ENCODE measurements at regions of chr14 and their contacts with region 1.

Region 1: DNA sequence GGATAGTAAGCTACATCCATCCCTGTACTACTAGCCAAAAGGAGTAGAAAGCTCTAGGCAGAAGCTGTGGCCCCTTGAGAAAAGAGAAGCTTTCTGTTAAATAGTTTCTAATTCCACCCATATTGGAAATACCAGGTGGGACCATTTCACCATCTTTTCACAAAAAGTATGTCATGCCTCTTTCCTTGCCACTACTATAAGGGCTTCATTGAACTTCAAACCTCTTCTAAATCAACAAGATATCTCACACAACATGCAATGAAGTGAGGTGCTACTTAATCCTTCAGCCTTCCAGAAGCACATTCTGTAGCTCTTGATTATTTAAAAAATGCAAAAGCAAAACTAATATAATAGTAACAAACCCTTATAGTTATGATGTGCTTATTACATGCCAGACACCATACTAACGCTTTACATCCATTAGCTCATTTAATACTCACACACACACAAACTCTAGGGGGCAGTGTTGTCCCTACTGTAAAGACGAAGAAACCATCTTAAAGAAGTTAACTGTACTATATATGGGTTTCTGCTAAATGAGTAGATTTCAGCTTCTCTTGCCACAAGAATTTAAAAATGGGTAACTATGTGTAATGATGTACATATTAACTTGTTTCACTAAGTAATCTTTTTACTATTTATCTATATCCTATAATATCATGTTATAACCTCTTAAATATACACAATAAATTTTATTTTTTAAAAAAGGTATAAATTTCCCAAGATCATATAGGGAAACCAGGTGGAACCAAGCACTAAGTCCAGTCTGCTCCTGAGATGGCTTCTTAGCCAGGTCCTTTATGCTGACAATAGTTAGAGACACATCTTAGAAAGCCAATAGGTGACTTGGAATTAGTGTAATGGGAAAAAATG is 124.4 kb downstream of the RPS29 start:
- DNase-seq: peak; percentile 81
- H3K4me3 Mint-ChIP-seq: no peak overlapping the region
- H3K27ac Mint-ChIP-seq: no peak overlapping the region
- H3K4me1 Mint-ChIP-seq: no peaks in the 10 kb centered on the region
- H3K27me3 Mint-ChIP-seq: no peaks in the 10 kb centered on the region

Region 2: GRCh38 chr14:49438256-49438770 is 23.5 kb before region 1 on chr14:
- CTCF ChIA-PET with region 1: interaction called, 12 read pairs
- intact Hi-C with region 1: no loop called
- DNase-seq: no peak
- H3K4me3 Mint-ChIP-seq: no peak overlapping the region
- H3K27ac Mint-ChIP-seq: no peak overlapping the region
- H3K4me1 Mint-ChIP-seq: no peaks in the 10 kb centered on the region
- H3K27me3 Mint-ChIP-seq: no peaks in the 10 kb centered on the region

Region 3: GRCh38 chr14:49483268-49483667 is 21.5 kb after region 1 on chr14:
- CTCF ChIA-PET with region 1: interaction called, 15 read pairs
- intact Hi-C with region 1: no loop called
- DNase-seq: no peak
- H3K4me3 Mint-ChIP-seq: no peak overlapping the region
- H3K27ac Mint-ChIP-seq: no peak overlapping the region
- H3K4me1 Mint-ChIP-seq: peaks cover 6% of the 10 kb centered on the region
- H3K27me3 Mint-ChIP-seq: peaks cover 3% of the 10 kb centered on the region

Region 4: DNA sequence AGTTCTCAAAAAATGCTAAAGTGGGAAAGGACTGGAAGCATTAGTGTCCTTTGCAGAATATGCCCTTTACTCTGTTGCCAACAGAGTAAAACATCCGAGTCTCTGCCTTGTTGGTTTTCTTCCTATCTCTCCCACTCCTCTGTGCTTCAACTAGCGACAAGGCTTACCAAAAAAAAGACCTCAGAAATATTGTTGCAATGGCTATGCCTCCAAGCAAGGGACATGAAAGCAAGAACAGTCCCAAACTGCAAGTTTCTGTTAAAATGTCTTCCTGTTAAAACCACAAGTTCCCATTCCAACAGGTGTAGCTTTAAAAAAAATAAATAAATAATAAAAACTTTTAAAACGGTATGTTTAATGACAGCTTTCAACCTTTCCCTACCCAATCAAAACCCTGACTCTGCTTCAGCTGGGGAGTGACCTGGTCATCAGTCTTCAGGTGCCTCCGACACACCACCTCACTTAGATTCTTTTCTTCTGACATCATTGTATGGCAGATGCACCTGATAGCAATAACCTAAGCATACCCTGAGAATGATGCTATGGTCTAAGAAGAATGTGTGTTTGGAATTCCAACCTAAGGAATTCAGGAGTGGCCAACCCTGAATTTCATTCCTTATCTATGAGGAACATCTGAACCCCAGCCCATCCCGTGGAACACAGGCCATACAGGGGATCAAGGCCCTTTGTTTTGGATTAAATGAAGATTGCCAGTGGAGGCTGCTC is 43.4 kb after region 1 on chr14:
- CTCF ChIA-PET with region 1: interaction called, 144 read pairs
- intact Hi-C with region 1: no loop called
- DNase-seq: no peak
- H3K4me3 Mint-ChIP-seq: no peak overlapping the region
- H3K27ac Mint-ChIP-seq: no peak overlapping the region
- H3K4me1 Mint-ChIP-seq: peaks cover 3% of the 10 kb centered on the region
- H3K27me3 Mint-ChIP-seq: peaks cover 4% of the 10 kb centered on the region

Region 5: GRCh38 chr14:49585803-49586672 is 124.3 kb after region 1 on chr14 and contains the start of gene RPS29:
- CTCF ChIA-PET with region 1: interaction called, 17 read pairs
- intact Hi-C with region 1: loop called (anchors 1 kb)
- DNase-seq: peak; percentile 99
- H3K4me3 Mint-ChIP-seq: peak within 1 kb of the TSS; percentile 87
- H3K27ac Mint-ChIP-seq: peak within 1 kb of the TSS; percentile 98
- H3K4me1 Mint-ChIP-seq: peaks cover 40% of the 10 kb centered on the region
- H3K27me3 Mint-ChIP-seq: peaks cover 3% of the 10 kb centered on the region
- total RNA-seq, gene RPS29: 1,858 to 2,382 TPM

Region 6: DNA sequence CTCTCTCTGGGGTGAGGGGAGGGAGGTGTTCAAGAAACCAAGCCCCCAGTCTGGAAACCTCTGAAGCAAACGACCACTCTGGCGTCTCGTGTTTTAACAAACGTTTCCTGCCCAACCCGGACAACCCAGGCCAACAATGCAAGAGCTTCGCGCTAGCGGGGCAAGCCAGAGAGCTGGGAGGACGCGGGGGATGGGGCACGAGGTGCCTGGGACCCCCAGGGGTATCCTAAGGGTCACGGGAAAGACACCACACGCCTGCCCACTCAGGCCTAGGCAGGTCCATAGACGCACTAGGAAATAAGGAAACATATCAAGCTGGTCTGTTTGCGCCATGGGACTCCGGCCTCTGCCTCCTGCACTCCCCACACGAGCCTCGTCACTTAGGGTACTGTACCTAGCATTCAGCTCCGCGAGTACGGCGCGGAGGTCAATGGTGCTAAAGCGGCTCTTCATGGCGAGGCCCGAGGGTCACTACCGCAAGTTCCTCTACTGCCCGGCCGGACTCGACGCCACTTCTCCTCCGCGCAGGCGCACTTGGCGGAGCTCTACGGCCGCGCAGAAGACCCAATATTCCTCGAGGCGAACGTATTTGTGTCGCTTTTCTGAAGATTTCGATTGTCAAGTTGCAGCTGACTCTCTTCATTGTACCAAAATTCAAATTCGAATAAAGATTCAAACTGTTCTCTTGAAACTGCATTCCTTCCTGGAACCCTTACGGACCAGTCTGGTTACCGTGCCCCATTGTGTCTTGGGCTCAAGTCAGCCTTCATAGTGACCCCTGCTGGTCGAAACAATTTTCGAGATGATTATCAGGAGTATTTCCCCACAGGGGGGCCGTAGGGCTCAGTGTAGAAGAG is 390.8 kb after region 1 on chr14 and contains the start of gene NEMF:
- CTCF ChIA-PET with region 1: interaction called, 4 read pairs
- intact Hi-C with region 1: loop called (anchors 2 kb)
- DNase-seq: peak; percentile 90
- H3K4me3 Mint-ChIP-seq: peak within 1 kb of the TSS; percentile 98
- H3K27ac Mint-ChIP-seq: peak within 1 kb of the TSS; percentile 97
- H3K4me1 Mint-ChIP-seq: peaks cover 37% of the 10 kb centered on the region
- H3K27me3 Mint-ChIP-seq: no peaks in the 10 kb centered on the region
- total RNA-seq, gene NEMF: 45.5 to 47.0 TPM

Region 7: GRCh38 chr14:50116181-50116956 is 654.6 kb after region 1 on chr14 and contains the start of gene VCPKMT:
- CTCF ChIA-PET with region 1: no interaction called
- intact Hi-C with region 1: loop called (anchors 5 kb)
- DNase-seq: peak; percentile 96
- H3K4me3 Mint-ChIP-seq: peak within 1 kb of the TSS; percentile 98
- H3K27ac Mint-ChIP-seq: peak within 1 kb of the TSS; percentile 94
- H3K4me1 Mint-ChIP-seq: peaks cover 32% of the 10 kb centered on the region
- H3K27me3 Mint-ChIP-seq: no peaks in the 10 kb centered on the region
- total RNA-seq, gene VCPKMT: 9.6 to 10.5 TPM